CD4-positive, alpha-beta memory T cell (primary cell): ENCODE measurements at regions of chr16 and their contacts with region 1.

Region 1: GRCh38 chr16:29694384-29695195 is 15.6 kb downstream of the QPRT start:
- DNase-seq: no peak
- H3K4me3 ChIP-seq: no peak overlapping the region
- H3K4me3 Mint-ChIP-seq: no peak overlapping the region
- H3K27ac ChIP-seq: no peak overlapping the region
- H3K27ac Mint-ChIP-seq: no peak overlapping the region
- H3K4me1 ChIP-seq: peaks cover 5% of the 10 kb centered on the region
- H3K4me1 Mint-ChIP-seq: peaks cover 4 to 10% (median 6%) of the 10 kb centered on the region in 4 donors
- H3K27me3 ChIP-seq: no peaks in the 10 kb centered on the region
- H3K27me3 Mint-ChIP-seq: no peaks in the 10 kb centered on the region

Region 2: DNA sequence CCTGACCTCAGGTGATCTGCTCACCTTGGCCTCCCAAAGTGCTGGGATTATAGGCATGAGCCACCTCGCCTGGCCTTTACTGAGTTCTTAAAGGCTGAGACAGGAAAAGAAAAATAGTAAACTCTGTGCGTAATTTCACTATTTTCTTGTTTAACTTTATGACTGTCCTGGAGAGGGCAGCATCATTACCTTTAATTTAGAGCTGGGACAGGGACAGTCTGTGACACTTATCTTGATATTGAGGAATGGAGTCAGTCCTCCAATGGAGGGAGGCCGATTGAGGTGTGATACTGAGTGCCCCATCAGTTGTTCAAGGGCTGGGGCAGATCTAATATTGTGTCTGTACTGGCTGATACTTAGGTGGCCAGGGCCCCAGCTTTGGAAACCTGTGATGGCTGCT is 53.0 kb before region 1 on chr16:
- CTCF ChIA-PET with region 1: no interaction called
- POLR2A ChIA-PET with region 1: no interaction called
- intact Hi-C with region 1: loop called (anchors 5 kb)
- DNase-seq: peak in 2 of 5 donors; percentile 26 to 37
- H3K4me3 ChIP-seq: no peak overlapping the region
- H3K4me3 Mint-ChIP-seq: peak overlapping the region in 3 of 8 donors; percentile 15 to 49 (median 25)
- H3K27ac ChIP-seq: no peak overlapping the region
- H3K27ac Mint-ChIP-seq: peak overlapping the region in 5 of 7 donors; percentile 0 to 78 (median 57)
- H3K4me1 ChIP-seq: peaks cover 22% of the 10 kb centered on the region
- H3K4me1 Mint-ChIP-seq: peaks cover 15 to 32% (median 22%) of the 10 kb centered on the region in 4 donors
- H3K27me3 ChIP-seq: no peaks in the 10 kb centered on the region
- H3K27me3 Mint-ChIP-seq: no peaks in the 10 kb centered on the region

Region 3: DNA sequence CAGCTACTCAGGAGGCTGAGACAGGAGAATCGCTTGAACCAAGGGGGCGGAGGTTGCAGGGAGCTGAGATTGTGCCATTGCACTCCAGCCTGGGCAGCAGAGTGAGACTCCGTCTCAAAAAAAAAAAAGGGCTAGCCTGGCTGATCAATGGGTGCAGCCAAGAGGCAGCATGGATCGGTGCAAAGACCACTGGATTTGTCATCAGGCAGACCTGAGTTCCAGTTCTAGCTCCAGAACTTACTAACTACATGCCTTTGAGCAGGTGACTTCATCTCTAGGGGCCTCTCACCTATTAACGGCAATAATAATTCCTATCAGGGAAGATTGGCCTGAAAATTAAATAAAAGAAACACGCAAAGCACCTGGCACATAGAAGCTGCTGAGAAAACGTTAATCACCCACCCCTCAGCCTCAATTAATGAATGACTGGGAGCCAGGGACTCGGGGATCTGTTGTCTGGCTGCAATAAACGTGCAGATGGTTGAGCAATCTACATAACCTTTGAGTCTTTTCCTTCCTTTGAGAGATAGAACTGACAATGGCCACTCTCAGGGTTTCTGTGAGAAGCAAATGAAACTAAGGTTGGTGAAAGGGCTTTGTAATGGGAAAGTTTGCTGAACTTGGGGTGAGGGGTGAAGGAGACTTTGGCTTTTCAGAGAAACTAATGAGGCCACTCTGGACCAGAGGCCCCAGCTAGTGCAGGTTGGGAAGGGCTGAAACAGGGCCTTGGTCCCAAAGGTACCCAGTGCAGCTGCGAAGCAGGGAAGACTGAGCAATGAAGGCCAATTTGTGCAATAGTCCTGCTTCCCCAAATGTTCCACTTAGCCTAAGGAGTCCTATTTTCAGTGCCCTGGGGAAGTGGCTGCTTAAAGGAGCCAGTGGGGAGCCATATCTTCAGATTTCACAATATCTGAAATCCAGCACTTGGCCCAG is 197.2 kb after region 1 on chr16:
- CTCF ChIA-PET with region 1: no interaction called
- POLR2A ChIA-PET with region 1: no interaction called
- intact Hi-C with region 1: no loop called
- DNase-seq: no peak
- H3K4me3 ChIP-seq: no peak overlapping the region
- H3K4me3 Mint-ChIP-seq: no peak overlapping the region
- H3K27ac ChIP-seq: no peak overlapping the region
- H3K27ac Mint-ChIP-seq: no peak overlapping the region
- H3K4me1 ChIP-seq: no peaks in the 10 kb centered on the region
- H3K4me1 Mint-ChIP-seq: no peaks in the 10 kb centered on the region
- H3K27me3 ChIP-seq: no peaks in the 10 kb centered on the region
- H3K27me3 Mint-ChIP-seq: peaks cover 4 to 10% of the 10 kb centered on the region in 2 donors

Region 4: DNA sequence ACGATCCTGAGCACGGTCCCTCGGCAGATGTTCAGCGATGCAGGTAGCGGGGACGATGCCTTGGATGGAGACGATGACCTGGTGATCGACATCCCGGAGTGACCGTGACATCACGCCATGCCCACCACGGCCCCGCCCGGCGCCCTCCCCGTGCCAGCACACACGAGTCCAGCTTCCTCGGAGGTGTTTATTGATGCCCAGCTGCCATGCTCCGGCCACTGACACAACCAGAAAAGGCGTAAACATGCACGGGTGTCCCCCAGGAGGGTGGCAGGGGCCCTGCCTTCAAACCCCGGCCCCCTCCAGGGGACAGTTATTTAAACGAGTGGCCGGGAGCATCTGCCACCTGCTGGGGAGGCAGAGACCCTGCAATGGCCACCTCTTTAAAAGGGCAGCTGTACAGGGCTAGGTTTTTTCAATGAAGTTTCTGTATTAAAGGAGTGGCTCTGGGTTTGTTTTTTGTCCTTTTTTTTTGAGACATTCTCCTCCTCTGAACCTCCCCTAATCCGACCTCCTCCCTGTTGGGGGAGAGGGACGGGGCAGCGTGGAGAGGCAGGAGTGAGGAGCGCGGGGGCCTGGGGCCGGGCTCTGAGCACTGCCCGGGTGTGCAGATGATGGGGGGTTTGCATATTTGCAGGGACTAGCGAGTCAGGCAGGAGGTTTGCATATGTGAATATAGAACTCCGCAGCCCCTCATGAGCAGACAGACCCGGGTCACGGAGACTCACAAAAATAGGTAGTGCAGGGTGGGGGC is 310.9 kb after region 1 on chr16:
- CTCF ChIA-PET with region 1: interaction called, 10 read pairs
- POLR2A ChIA-PET with region 1: interaction called, 3 read pairs
- intact Hi-C with region 1: loop called (anchors 1 kb)
- DNase-seq: peak in 4 of 5 donors; percentile 39 to 48 (median 44)
- H3K4me3 ChIP-seq: no peak overlapping the region
- H3K4me3 Mint-ChIP-seq: no peak overlapping the region
- H3K27ac ChIP-seq: no peak overlapping the region
- H3K27ac Mint-ChIP-seq: no peak overlapping the region
- H3K4me1 ChIP-seq: peaks cover 5% of the 10 kb centered on the region
- H3K4me1 Mint-ChIP-seq: peaks cover 2 to 5% (median 4%) of the 10 kb centered on the region in 4 donors
- H3K27me3 ChIP-seq: peaks cover 6% of the 10 kb centered on the region
- H3K27me3 Mint-ChIP-seq: peaks cover 2 to 11% of the 10 kb centered on the region in 2 donors

Region 5: DNA sequence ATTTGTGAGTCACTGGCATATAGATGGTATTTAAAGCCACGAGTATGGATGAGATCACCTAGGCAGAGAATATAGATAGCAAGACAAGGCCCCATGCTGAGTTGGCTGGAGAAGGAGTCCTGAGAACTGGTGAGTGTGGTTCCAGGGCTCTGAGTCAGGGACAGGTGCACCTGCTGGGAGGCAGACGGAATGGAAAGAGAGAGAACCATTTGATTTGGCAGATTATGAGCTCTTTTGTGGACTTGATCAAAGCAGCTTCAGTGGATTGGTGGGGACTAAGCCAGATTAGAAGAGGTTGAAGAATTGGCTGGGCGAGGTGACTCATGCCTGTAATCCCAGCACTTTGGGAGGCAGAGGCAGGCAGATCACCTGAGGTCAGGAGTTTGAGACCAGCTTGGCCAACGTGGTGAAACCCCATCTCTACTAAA is 324.2 kb after region 1 on chr16:
- CTCF ChIA-PET with region 1: interaction called, 11 read pairs
- POLR2A ChIA-PET with region 1: interaction called, 3 read pairs
- intact Hi-C with region 1: loop called (anchors 1 kb)
- DNase-seq: no peak
- H3K4me3 ChIP-seq: no peak overlapping the region
- H3K4me3 Mint-ChIP-seq: peak overlapping the region in 2 of 8 donors; percentile 1 to 56
- H3K27ac ChIP-seq: no peak overlapping the region
- H3K27ac Mint-ChIP-seq: peak overlapping the region in 1 of 7 donors; percentile 28
- H3K4me1 ChIP-seq: peaks cover 9% of the 10 kb centered on the region
- H3K4me1 Mint-ChIP-seq: peaks cover 4 to 13% (median 7%) of the 10 kb centered on the region in 4 donors
- H3K27me3 ChIP-seq: no peaks in the 10 kb centered on the region
- H3K27me3 Mint-ChIP-seq: no peaks in the 10 kb centered on the region

Region 6: DNA sequence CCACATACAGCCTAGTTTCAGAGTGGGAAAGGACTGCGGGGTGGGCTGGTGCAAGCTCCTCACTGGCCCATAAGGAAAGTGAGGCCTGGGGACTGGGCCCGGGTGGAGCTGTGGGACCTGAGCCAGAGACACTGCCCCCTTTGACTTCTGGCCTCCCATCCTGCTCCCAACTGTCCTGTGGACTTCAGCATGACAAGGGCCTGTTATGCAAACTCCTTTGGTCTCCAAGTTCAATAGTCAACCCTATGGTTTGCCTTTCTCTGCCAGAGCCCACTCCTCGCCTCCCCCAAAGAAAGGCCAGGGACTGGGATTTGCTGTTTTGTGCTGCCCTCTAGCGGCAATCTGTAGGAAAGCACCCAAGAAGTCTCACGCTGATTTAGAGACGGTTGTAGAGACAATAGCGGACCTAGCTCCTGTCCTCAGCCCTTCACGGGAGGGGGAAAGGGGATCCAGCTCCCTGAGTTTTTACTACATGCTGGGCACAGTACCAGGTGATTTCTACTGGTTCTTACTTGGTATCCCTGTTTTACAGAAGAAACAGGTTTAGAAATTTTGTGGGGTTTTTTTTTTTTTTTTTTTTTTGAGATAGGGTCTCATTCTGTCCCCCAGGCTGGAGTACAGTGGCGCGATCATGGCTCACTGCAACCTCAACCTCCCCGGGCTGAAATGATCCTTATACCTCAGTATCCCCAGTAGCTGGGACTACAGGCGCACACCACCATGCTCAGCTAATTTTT is 337.7 kb after region 1 on chr16:
- CTCF ChIA-PET with region 1: interaction called, 16 read pairs
- POLR2A ChIA-PET with region 1: no interaction called
- intact Hi-C with region 1: no loop called
- DNase-seq: peak; percentile 61 to 70 (median 66)
- H3K4me3 ChIP-seq: no peak overlapping the region
- H3K4me3 Mint-ChIP-seq: peak overlapping the region in 5 of 8 donors; percentile 35 to 76 (median 43)
- H3K27ac ChIP-seq: no peak overlapping the region
- H3K27ac Mint-ChIP-seq: peak overlapping the region in 1 of 7 donors; percentile 48
- H3K4me1 ChIP-seq: peaks cover 5% of the 10 kb centered on the region
- H3K4me1 Mint-ChIP-seq: peaks cover 4 to 18% (median 4%) of the 10 kb centered on the region in 4 donors
- H3K27me3 ChIP-seq: peaks cover 18% of the 10 kb centered on the region
- H3K27me3 Mint-ChIP-seq: peaks cover 26 to 37% of the 10 kb centered on the region in 2 donors

Region 7: GRCh38 chr16:30091474-30092372 is 397.1 kb after region 1 on chr16 and contains the start of gene TBX6:
- CTCF ChIA-PET with region 1: no interaction called
- POLR2A ChIA-PET with region 1: no interaction called
- intact Hi-C with region 1: no loop called
- DNase-seq: peak; percentile 90 to 93 (median 91)
- H3K4me3 ChIP-seq: peak within 1 kb of the TSS in 1 of 2 donors; percentile 72
- H3K4me3 Mint-ChIP-seq: peak within 1 kb of the TSS; percentile 87 to 95 (median 90)
- H3K27ac ChIP-seq: peak within 1 kb of the TSS; percentile 75
- H3K27ac Mint-ChIP-seq: peak within 1 kb of the TSS; percentile 84 to 98 (median 95)
- H3K4me1 ChIP-seq: peaks cover 60% of the 10 kb centered on the region
- H3K4me1 Mint-ChIP-seq: peaks cover 27 to 65% (median 42%) of the 10 kb centered on the region in 4 donors
- H3K27me3 ChIP-seq: no peaks in the 10 kb centered on the region
- H3K27me3 Mint-ChIP-seq: no peaks in the 10 kb centered on the region
- total RNA-seq, gene TBX6: 1.3 to 1.4 TPM

Region 8: GRCh38 chr16:30173054-30173453 is 478.5 kb after region 1 on chr16:
- CTCF ChIA-PET with region 1: no interaction called
- POLR2A ChIA-PET with region 1: no interaction called
- intact Hi-C with region 1: no loop called
- DNase-seq: no peak
- H3K4me3 ChIP-seq: no peak overlapping the region
- H3K4me3 Mint-ChIP-seq: no peak overlapping the region
- H3K27ac ChIP-seq: no peak overlapping the region
- H3K27ac Mint-ChIP-seq: no peak overlapping the region
- H3K4me1 ChIP-seq: no peaks in the 10 kb centered on the region
- H3K4me1 Mint-ChIP-seq: peaks cover 0 to 2% (median under 1%) of the 10 kb centered on the region in 4 donors
- H3K27me3 ChIP-seq: no peaks in the 10 kb centered on the region
- H3K27me3 Mint-ChIP-seq: no peaks in the 10 kb centered on the region